Activated B cell treated with CpG ODN at 0.5 μM for 24 hours (primary cell): ENCODE measurements at regions of chr5 and their contacts with region 1.

Region 1: DNA sequence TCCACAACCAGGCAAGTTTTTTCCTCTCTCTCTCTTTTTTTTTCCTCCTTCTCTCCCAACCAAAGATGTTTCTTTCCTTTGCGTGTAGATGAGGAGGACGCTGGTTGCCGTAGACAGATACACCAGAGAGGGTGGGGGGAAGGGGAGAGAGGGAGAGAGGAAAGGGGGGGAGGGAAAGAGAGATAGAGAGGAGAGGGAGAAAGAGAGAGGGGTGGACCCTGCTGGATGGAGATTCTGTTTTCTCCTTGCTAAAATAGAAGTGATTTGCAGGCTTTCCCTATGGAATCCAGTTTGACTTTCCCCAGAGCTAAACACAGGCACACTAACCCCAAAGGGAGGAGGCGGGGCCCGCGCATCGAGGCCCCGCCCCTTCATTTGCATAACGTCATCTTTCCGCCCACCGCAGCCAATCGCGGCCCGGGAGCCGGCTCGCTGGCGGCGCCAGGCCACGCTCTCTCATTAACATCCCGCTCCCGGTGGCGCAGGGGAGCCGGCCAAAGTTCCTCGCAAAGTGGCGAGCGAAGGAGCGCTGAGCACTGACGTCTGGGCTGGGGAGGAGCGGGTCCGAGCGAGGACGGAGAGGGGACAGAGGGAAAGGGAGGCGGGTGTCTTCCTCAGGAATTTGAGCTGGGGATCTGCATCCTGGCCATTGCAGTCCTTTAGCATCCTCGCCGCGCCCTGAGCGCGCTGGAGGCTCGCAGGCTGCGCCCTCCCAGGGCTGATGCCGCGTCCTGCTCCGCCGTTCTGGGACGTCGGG is 487 bp upstream of the EBF1 start:
- DNase-seq: peak; percentile 92
- ATAC-seq: peak; percentile 64
- H3K4me3 Mint-ChIP-seq: peak overlapping the region; percentile 99
- H3K27ac Mint-ChIP-seq: peak overlapping the region; percentile 95
- H3K4me1 Mint-ChIP-seq: peaks cover 69% of the 10 kb centered on the region
- H3K27me3 Mint-ChIP-seq: no peaks in the 10 kb centered on the region
- CTCF ChIP-seq: no peak

Region 2: DNA sequence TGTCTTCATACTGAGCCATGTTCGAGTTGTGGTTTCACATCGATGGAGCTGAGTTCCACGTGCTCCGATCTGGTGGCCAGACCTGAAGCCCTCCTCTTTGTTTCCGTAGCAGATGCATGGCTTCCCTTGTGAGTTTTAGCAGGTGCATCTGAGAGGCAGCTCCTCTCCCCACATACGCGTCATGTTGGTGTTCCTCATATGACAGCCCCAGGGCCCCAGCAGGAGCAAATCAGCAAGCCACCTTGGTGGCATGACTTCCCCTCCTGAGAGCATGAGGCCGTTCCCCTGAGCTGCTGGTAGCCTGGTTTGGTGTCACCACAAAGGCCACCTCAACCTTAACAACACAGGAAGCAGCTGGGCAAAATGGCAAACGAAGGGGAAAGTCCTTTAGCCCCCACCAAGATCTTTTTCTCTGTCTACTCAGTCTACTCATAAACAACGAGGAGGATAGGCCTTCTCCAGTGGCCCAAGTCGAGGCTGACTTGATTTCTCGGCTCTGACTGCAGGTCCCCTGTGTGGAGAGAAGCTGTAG is 1828.4 kb before region 1 on chr5:
- CTCF ChIA-PET with region 1: no interaction called
- POLR2A ChIA-PET with region 1: interaction called, 3 read pairs
- intact Hi-C with region 1: loop called (anchors 5 kb)
- DNase-seq: peak; percentile 74
- ATAC-seq: peak; percentile 86
- H3K4me3 Mint-ChIP-seq: peak overlapping the region; percentile 73
- H3K27ac Mint-ChIP-seq: peak overlapping the region; percentile 99
- H3K4me1 Mint-ChIP-seq: peaks cover 93% of the 10 kb centered on the region
- H3K27me3 Mint-ChIP-seq: no peaks in the 10 kb centered on the region
- CTCF ChIP-seq: no peak

Region 3: GRCh38 chr5:158819840-158820620 is 280.2 kb before region 1 on chr5:
- CTCF ChIA-PET with region 1: no interaction called
- POLR2A ChIA-PET with region 1: interaction called, 16 read pairs
- intact Hi-C with region 1: loop called (anchors 1 kb)
- DNase-seq: no peak
- ATAC-seq: peak; percentile 76
- H3K4me3 Mint-ChIP-seq: peak overlapping the region; percentile 75
- H3K27ac Mint-ChIP-seq: peak overlapping the region; percentile 95
- H3K4me1 Mint-ChIP-seq: peaks cover 99% of the 10 kb centered on the region
- H3K27me3 Mint-ChIP-seq: no peaks in the 10 kb centered on the region
- CTCF ChIP-seq: no peak

Region 4: DNA sequence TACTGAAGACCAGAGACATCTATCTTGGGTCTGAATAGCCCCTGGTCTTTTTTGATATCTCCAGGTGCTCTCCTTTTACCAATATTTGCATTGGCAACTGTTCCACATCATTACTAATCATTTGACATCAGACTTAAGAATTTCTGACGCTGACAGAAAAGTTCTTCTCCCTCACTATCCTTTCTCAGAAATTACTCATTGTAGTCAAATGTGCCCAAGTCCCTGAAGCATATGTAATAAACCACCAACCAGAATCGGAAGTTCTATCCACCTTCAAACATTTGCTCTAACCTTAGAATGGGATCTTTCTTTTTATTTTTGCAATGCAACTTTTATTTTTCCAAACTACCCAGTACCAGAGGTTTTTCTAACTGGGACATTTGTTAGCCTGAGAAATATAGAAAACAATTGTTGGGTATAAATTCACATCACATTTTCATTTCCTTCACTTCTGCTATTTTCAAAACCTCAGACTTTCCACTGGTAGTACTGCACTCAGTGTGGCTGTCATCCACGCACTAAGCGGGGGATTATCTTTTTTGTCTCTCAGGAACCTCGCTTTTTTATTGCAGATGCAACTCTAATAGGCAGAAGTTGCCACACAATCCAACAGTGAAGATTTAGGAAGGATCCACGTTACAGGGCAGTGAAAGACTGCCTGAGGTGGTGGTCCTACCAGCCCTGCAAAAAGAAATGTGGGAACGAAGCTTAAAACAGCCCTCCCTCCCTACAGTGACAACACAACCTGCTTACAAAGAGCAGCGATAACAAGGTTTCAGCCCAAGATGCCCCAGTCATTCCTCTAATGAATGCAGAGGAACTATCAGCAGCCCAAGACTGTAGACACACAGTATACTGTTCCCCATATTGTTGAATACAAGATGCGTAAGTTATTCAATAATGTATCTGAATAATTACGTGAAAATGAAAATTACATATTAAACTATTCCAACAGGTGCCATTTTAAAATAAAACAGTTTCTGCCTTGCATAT is 201.7 kb before region 1 on chr5:
- CTCF ChIA-PET with region 1: no interaction called
- POLR2A ChIA-PET with region 1: interaction called, 86 read pairs
- intact Hi-C with region 1: loop called (anchors 1 kb)
- DNase-seq: peak; percentile 33
- ATAC-seq: peak; percentile 74
- H3K4me3 Mint-ChIP-seq: peak overlapping the region; percentile 25
- H3K27ac Mint-ChIP-seq: peak overlapping the region; percentile 93
- H3K4me1 Mint-ChIP-seq: peaks cover 78% of the 10 kb centered on the region
- H3K27me3 Mint-ChIP-seq: no peaks in the 10 kb centered on the region
- CTCF ChIP-seq: no peak

Region 5: GRCh38 chr5:159049844-159050315 is 50.3 kb before region 1 on chr5:
- CTCF ChIA-PET with region 1: interaction called, 3 read pairs
- POLR2A ChIA-PET with region 1: interaction called, 136 read pairs
- intact Hi-C with region 1: loop called (anchors 1 kb)
- DNase-seq: no peak
- ATAC-seq: no peak
- H3K4me3 Mint-ChIP-seq: peak overlapping the region; percentile 76
- H3K27ac Mint-ChIP-seq: peak overlapping the region; percentile 93
- H3K4me1 Mint-ChIP-seq: peaks cover 97% of the 10 kb centered on the region
- H3K27me3 Mint-ChIP-seq: no peaks in the 10 kb centered on the region
- CTCF ChIP-seq: no peak

Region 6: GRCh38 chr5:159209438-159210305 is 109.5 kb after region 1 on chr5 and contains the start of gene RNF145:
- CTCF ChIA-PET with region 1: no interaction called
- POLR2A ChIA-PET with region 1: no interaction called
- intact Hi-C with region 1: loop called (anchors 1 kb)
- DNase-seq: peak; percentile 93
- ATAC-seq: peak; percentile 79
- H3K4me3 Mint-ChIP-seq: peak within 1 kb of the TSS; percentile 97
- H3K27ac Mint-ChIP-seq: peak within 1 kb of the TSS; percentile 96
- H3K4me1 Mint-ChIP-seq: peaks cover 57% of the 10 kb centered on the region
- H3K27me3 Mint-ChIP-seq: no peaks in the 10 kb centered on the region
- CTCF ChIP-seq: no peak
- total RNA-seq, gene RNF145: 66.1 and 79.1 TPM in 2 replicates